ENCODE measurements at regions of chr19 and their contacts with region 1.

Region 1: DNA sequence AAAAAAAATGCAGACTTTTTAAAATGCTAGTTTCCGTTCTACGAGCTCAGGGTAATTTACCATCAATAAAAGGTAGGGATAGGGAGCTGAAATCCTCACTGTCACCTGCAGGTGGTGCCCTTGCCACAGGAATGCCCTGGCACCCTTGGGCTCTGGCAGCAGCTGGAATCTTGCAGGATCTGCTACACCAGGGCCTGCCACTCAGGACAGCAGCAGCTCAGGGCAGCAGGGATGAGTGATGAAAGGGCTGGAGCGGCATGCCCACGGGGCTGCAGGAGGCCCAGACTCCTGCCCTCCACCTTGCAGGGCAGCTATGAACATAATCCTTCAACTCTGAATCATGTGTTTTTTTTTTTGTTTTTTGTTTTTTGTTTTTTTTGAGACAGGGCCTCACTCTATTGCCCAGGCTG is 54.0 kb downstream of the GNG7 start:
- DNase-seq: peak; percentile 82 to 93 (median 89)
- H3K4me3 ChIP-seq: no peak overlapping the region
- H3K27ac ChIP-seq: no peak overlapping the region
- H3K4me1 ChIP-seq: peaks cover 14 to 15% of the 10 kb centered on the region in 2 donors
- H3K27me3 ChIP-seq: no peaks in the 10 kb centered on the region
- CTCF ChIP-seq: peak; percentile 72 to 98 (median 96)
- POLR2A ChIP-seq: no peak

Region 2: DNA sequence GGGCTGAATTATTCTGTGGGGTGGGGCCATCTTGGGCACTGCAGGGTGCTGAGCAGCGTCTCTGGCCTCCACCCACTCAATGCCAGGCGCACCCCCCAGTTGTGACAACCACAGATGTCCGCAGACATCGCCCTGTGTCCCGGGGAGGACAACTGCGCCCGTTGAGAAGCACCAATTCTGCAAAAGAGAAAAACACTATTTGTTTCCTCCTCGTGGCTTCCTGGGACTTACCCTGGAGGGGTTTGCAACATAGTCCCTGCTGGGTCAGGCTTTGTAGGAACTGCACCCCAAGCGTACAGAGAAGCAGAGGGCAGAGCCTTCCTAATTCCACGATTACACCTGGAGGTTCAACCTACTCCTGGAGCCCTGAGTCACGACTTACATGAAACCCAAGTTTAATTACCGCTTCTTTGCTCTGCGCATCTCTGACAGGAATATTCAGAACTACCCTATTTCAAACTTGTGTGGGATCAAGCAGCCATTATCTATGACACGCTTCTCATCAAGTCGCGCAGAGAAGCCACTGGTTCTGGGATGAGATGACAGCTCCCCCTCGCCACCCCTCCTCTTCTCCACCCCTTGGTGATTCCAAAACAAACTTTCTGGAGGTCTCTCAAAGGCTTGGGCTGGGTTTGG is 102.4 kb after region 1 on chr19:
- intact Hi-C with region 1: loop called (anchors 2 to 5 kb)
- DNase-seq: no peak
- H3K4me3 ChIP-seq: no peak overlapping the region
- H3K27ac ChIP-seq: no peak overlapping the region
- H3K4me1 ChIP-seq: no peaks in the 10 kb centered on the region
- H3K27me3 ChIP-seq: no peaks in the 10 kb centered on the region
- CTCF ChIP-seq: no peak
- POLR2A ChIP-seq: no peak

Region 3: DNA sequence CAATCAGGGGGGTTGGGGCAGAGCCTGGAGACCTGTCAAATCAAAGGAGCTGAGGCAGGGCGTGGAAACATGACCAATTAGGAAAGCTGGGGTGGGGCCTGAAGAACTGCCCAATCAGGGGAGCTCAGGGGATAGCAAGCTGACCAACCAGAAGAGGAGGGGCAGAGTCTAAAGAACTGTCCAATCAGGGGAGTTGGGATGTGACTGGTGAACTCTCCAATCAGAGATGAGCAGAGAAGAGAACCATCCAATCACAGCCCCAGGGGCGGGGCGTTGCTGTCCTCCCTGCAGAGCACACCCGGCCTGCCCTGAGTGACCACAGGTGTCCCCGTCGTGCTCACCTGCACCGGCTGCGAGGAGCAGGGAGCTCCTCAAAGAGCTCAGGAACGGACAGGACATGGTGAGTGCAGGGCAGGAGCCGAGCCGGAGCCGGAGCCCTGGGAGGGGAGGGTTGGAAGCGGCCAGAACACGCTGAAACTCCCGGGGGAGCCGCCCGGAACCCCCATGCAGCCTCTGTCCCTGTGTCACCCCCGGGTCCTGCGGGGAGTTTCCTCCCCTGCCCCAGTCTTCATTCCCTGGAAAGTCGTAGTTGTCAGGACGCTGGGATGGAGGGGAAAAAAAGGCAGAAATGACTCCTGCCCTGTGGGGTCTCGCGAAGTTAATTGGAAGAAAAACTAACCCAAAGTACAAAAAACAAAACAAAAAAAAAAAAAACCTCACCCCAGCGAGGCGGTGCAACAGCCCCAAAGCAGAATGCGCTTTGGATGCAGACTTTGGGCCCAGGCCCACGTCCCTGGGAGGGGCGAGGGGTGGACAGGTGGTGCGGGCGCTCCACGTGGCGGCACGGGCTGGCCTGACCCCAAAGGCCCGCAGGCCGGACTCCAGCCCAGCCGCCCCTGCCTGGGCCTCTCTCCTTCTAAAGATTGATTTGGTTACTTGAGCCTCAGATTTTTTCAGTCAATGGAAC is 218.8 kb after region 1 on chr19 and contains the start of gene ZNF556:
- intact Hi-C with region 1: loop called (anchors 5 to 10 kb)
- DNase-seq: peak in 2 of 7 donors; percentile 9 to 40
- H3K4me3 ChIP-seq: peak within 1 kb of the TSS in 1 of 4 donors; percentile 26
- H3K27ac ChIP-seq: no peak within 1 kb of the TSS
- H3K4me1 ChIP-seq: no peaks in the 10 kb centered on the region
- H3K27me3 ChIP-seq: no peaks in the 10 kb centered on the region
- CTCF ChIP-seq: no peak
- POLR2A ChIP-seq: no peak
- total RNA-seq, gene ZNF556: 0.06 to 0.45 (median 0.13) TPM in 6 of 9 donors, not detected in the others